K562 (cell line): ENCODE measurements at regions of chr1 and their contacts with region 1.

Region 1: DNA sequence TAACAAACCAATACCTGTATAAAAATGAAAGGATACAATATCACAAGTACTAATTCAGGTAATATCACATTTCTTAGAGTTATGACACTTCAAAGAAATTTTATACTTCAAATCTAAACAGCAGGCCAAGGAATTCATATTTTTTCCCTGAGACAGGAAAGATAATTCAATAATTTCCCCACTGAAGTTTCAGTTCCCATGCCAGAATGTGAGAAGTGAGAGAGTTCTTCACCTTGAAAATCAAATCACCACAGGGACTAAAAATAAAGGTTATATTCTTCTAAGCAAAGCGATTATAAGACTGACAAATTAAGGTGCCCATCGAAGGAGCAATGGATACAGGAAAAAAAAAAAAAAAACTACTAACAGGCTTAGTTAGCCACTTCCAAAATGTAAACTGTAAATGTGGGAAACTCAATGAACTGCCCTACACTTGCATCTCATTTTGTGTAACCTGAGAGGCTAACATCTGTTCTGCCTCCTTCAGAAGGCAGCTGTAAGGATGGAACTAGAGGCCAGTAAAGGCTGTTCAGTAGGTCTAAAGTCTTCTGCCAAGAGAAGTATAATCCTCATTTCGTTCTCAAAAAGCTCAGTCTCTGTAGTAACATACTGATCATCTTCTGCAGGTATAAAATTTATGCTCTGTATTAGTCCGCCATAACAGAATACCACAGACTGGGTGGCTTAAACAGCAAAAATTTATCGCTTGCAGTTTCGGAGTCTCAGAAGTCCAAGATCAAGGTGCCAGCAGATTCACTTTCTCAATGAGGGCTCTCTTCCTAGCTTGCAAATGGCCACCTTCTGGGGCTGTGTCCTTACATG is 127.8 kb downstream of the RERE start:
- DNase-seq: no peak
- ATAC-seq: 0 out of 3 replicates have a peak, but pooled peaks have one; percentile 28
- H3K4me3 ChIP-seq: no peak overlapping the region
- H3K27ac ChIP-seq: no peak overlapping the region
- H3K4me1 ChIP-seq: peaks cover 3 to 5% of the 10 kb centered on the region in 2 experiments; a peak in 2 of 5 replicates
- H3K27me3 ChIP-seq: no peaks in the 10 kb centered on the region
- CTCF ChIP-seq: no peak
- EP300 ChIP-seq: no peak
- POLR2A ChIP-seq: no peak
- RAD21 ChIP-seq: no peak

Region 2: DNA sequence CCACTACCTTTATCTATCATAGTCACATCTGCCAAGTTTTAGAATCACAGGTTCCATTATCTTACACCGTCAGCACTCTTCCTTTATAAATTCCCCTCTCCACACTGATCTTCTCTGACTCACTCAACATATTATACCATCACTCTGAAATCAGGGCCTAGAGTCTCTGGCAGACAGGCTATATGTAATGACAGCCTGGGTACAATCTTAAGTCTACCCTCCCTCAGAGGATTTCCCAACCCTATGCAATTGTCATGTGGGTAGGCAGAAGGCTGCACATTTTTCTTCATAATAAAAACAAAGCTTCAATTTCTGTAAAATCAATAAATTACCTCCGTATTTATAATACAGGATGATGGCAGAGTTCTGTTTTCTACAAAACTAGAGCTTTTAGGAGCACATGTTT is 10.2 kb before region 1 on chr1:
- CTCF ChIA-PET with region 1: no interaction called
- POLR2A ChIA-PET with region 1: interaction called, 11 read pairs
- in situ Hi-C with region 1: no loop called
- intact Hi-C with region 1: no loop called
- DNase-seq: peak in 1 of 4 experiments; percentile 43
- ATAC-seq: peak; percentile 78
- H3K4me3 ChIP-seq: no peak overlapping the region
- H3K27ac ChIP-seq: no peak overlapping the region
- H3K4me1 ChIP-seq: peaks cover 0 to 6% of the 10 kb centered on the region in 2 experiments; a peak in 2 of 5 replicates
- H3K27me3 ChIP-seq: no peaks in the 10 kb centered on the region
- CTCF ChIP-seq: no peak
- EP300 ChIP-seq: no peak
- POLR2A ChIP-seq: no peak
- RAD21 ChIP-seq: no peak

Region 3: DNA sequence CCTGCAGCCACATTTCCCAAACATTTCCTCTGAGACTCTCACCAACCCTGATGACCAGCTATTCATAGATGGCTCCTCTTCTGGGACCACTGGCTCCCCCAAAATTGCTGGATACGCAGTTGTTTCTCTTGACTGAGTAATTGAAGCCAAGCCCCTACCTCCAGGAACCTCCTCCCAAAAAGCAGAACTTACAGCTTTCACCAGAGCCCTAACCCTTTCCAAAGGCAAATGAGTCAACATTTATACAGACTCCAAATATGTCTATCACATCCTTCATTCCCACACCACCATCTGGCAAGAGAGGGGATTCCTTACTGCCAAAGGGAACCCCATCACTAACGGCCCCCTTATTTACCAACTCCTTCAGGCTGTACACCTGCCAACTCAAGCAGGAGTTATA is 235.8 kb after region 1 on chr1:
- CTCF ChIA-PET with region 1: no interaction called
- POLR2A ChIA-PET with region 1: no interaction called
- in situ Hi-C with region 1: no loop called
- intact Hi-C with region 1: no loop called
- DNase-seq: no peak
- ATAC-seq: no peak
- H3K4me3 ChIP-seq: no peak overlapping the region
- H3K27ac ChIP-seq: no peak overlapping the region
- H3K4me1 ChIP-seq: peaks cover 0 to 3% of the 10 kb centered on the region in 2 experiments; a peak in 1 of 5 replicates
- H3K27me3 ChIP-seq: peaks cover 49 to 71% of the 10 kb centered on the region in 2 experiments
- CTCF ChIP-seq: no peak
- EP300 ChIP-seq: no peak
- POLR2A ChIP-seq: no peak
- RAD21 ChIP-seq: no peak